Left colon (tissue), 2 donors: ENCODE measurements at regions of chr4 and their contacts with region 1.

Region 1: DNA sequence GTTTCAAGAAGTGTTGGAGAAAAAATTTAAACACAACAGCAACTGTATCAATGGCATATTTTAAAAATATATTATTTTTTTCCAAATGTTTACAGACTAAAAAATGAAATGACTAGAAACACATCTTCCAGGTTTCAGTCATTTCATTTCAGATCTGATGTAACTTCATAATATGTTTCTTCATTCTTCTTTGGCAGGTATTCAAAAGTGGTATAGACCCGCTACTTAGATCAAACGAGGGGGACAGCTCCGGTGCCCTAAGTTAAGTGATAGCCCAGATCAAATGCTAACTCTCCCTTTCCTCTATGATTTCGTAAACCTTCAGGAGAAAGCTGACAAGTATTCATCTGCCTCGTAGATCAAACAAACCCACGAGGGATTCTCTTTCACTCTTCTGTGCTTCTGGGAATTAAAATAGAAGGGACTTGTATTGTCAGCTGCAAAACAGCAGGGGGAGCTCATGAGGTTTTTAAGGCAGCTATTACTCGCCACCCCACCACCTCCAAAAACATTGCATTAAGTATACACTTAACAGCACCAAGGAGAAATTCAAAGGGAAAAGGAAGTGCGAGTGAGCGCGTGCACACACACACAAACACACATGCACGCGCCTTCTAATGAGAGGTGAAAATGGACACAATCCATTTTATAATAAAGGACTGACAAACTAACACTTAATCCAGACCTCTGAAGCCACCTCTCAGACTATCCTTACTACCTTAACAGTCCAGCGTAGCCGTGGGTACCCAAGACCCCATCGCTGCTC is 21.4 kb downstream of the HELT start:
- DNase-seq: peak in 1 of 2 donors; percentile 45
- ATAC-seq: peak; percentile 62

Region 2: DNA sequence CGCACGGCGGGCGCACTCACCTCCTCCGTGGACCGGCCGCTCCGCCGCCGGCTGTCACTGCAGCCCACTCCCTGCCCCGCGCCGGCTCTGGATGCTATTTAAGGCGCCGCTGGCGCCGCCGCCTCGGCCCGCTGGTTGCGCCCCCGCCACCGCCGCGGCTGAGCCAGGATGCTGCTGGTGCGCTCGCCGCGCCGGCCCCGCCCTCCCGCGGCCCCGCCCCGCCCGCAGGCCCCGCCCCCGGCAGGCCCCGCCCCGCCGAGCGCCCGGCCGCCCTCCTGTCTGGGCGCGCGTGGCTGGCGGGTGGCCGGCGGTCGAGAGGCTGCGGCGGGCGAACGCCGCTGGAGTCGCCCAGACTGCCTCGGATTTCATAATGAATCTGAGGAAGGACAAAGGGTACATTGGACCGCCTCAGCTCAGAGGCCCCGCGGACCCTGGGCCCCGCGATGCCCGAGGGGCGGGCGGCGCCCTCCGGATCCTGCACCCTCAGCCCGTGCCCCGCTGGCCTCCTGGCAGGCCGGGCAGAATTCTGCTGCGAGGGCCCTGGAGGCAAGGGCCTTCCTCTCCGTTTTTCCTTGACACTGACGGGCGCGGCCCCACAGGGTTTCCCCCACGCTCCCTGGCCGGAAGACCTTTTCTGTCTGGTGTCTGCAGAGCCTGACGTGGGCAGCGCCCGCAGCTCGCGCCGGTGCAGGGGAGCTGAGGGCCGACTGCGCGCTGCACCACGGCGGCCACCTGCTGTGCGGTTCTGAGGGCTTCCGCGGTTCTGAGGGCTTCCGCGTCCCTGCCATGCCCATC is 213.6 kb before region 1 on chr4 and contains the start of gene ACSL1:
- intact Hi-C with region 1: no loop called
- DNase-seq: peak; percentile 65 to 82
- ATAC-seq: peak; percentile 94
- total RNA-seq, gene ACSL1: 39.4 to 41.2 TPM

Region 3: GRCh38 chr4:185134307-185134869 is 94.7 kb after region 1 on chr4:
- intact Hi-C with region 1: loop called in 1 of 2 experiments (anchors 2 kb)
- DNase-seq: no peak
- ATAC-seq: peak; percentile 69